ENCODE measurements at regions of chr16 and their contacts with region 1.

Region 1: GRCh38 chr16:11977376-11978041 is 975 bp downstream of the SNX29 start:
- DNase-seq: no peak
- ATAC-seq: no peak
- H3K4me3 ChIP-seq: peak overlapping the region; percentile 75 to 100 (median 84)
- H3K4me3 Mint-ChIP-seq: peak overlapping the region; percentile 96
- H3K27ac ChIP-seq: peak overlapping the region; percentile 82 to 92
- H3K27ac Mint-ChIP-seq: peak overlapping the region; percentile 94
- H3K4me1 ChIP-seq: peaks cover 55 to 60% of the 10 kb centered on the region in 2 donors
- H3K4me1 Mint-ChIP-seq: peaks cover 60% of the 10 kb centered on the region
- H3K27me3 ChIP-seq: no peaks in the 10 kb centered on the region
- H3K27me3 Mint-ChIP-seq: no peaks in the 10 kb centered on the region
- CTCF ChIP-seq: no peak

Region 2: DNA sequence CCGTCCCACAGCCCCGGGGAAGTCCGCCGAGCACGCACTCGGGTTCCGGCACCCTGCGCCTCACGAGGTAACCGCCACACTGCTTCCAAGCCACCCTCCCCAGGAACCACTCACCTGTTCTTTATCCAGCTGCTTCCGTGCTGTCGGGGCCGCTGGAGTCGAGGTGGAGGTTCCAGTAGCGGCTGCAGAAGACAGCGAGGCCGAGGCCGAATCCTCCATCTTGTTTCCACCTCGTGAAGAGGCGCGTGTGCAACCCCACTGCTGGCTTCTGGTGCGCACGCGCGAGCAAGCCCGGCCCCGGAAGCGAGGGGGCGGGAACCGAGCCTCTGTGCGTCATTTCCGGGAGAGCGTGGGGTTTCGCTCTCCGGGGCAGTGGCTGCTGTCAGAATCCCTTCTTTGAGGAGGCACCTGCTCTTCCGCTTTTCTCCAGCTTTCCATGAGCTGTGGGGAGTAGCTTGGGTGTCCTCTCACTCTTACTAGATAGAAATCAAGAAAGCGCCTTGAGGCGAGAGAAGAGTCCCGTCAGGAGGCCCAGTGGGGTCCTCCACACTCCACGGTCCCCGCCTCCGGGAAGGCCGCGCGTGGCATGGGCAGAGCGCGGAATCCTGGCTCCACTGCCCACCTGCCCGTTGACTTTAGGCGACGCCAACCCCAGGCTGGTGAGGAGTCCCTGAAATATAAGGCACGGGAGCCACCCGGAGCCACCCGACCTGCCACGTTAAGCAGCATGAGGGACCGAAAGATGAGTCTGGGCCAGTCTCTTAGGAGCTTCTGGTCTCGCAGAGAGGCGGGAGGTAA is 126.0 kb before region 1 on chr16 and contains the start of gene RSL1D1:
- CTCF ChIA-PET with region 1: no interaction called
- POLR2A ChIA-PET with region 1: no interaction called
- intact Hi-C with region 1: loop called (anchors 1 kb)
- DNase-seq: peak; percentile 98
- ATAC-seq: peak; percentile 88
- H3K4me3 ChIP-seq: peak within 1 kb of the TSS; percentile 73 to 97 (median 91)
- H3K4me3 Mint-ChIP-seq: peak within 1 kb of the TSS; percentile 97
- H3K27ac ChIP-seq: peak within 1 kb of the TSS; percentile 81 to 94
- H3K27ac Mint-ChIP-seq: peak within 1 kb of the TSS; percentile 97
- H3K4me1 ChIP-seq: peaks cover 18 to 27% of the 10 kb centered on the region in 2 donors
- H3K4me1 Mint-ChIP-seq: peaks cover 40% of the 10 kb centered on the region
- H3K27me3 ChIP-seq: no peaks in the 10 kb centered on the region
- H3K27me3 Mint-ChIP-seq: no peaks in the 10 kb centered on the region
- CTCF ChIP-seq: no peak
- total RNA-seq, gene RSL1D1: 146 and 167 TPM in 2 replicates

Region 3: DNA sequence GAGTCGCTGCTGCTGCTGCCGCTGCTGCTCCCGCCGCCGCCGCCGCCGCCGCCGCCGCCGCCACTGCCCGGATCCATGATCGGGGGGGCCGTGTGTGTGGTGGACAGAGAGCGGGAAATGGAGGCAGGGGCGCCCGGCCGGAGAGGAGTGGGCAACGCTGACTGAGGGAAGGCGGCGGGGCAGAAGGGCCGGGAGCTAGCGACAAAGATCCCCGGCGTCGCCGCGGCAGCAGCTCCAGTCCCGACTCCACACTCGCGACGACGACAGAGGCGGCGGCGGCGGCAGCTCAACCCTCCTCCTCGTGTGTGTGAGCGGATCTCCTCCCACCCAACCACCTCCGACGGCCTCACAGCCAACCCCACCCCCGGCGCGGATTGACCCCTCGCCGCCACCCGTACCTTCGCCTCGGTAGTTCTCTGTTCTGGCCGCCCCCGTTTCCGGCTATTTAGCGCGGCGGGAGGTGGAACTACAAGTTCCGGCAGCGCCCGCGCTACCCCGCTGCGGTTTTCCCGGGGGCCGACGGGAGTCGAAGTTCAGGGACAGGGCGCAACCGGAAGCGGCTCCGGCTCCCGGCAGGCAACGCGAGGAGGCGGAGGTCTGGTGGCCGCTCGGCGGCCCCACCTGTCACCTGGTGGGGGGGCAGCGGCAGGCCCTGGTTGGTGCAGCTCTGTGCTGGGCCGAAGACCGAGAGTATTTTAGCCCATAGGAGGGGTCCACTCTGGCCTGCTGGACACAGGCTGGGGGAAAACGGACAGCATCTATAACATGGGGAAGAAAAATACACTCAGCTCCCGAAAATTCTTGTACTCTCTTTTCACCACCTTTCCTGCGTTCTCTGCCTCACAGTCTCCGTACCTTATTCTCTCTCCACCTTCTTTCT is 61.6 kb before region 1 on chr16 and contains the start of gene GSPT1:
- CTCF ChIA-PET with region 1: no interaction called
- POLR2A ChIA-PET with region 1: no interaction called
- intact Hi-C with region 1: loop called (anchors 2 kb)
- DNase-seq: peak; percentile 99
- ATAC-seq: peak; percentile 93
- H3K4me3 ChIP-seq: peak within 1 kb of the TSS; percentile 65 to 78 (median 76)
- H3K4me3 Mint-ChIP-seq: peak within 1 kb of the TSS; percentile 91
- H3K27ac ChIP-seq: peak within 1 kb of the TSS; percentile 72 to 82
- H3K27ac Mint-ChIP-seq: peak within 1 kb of the TSS; percentile 95
- H3K4me1 ChIP-seq: peaks cover 29 to 31% of the 10 kb centered on the region in 2 donors
- H3K4me1 Mint-ChIP-seq: peaks cover 32% of the 10 kb centered on the region
- H3K27me3 ChIP-seq: peaks cover 0 to 4% (median 0%) of the 10 kb centered on the region in 4 experiments
- H3K27me3 Mint-ChIP-seq: peaks cover 11% of the 10 kb centered on the region
- CTCF ChIP-seq: no peak
- total RNA-seq, gene GSPT1: 72.6 and 77.0 TPM in 2 replicates

Region 4: DNA sequence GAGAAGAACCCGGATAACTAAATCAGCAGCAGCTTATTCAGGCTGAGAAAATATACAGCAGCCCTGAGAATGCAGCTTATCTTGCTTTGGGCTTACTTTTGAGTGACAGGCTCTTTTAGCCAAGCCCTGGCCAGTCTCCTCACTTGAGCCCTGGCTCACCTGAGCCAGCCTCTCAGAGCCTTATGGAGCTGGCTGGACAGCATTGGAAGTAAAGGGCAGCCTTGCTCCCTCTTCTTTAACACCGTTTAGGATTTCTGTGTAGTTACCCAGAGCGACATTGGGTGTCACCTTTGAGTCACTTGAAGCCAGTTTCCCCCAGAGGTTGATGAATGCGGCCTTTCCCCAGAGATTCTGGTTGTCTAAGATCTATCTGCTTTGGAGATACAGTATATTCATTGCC is 28.0 kb before region 1 on chr16:
- CTCF ChIA-PET with region 1: interaction called, 23 read pairs
- POLR2A ChIA-PET with region 1: interaction called, 3 read pairs
- intact Hi-C with region 1: loop called (anchors 5 kb)
- DNase-seq: peak; percentile 78
- ATAC-seq: peak; percentile 91
- H3K4me3 ChIP-seq: no peak overlapping the region
- H3K4me3 Mint-ChIP-seq: no peak overlapping the region
- H3K27ac ChIP-seq: no peak overlapping the region
- H3K27ac Mint-ChIP-seq: peak overlapping the region; percentile 64
- H3K4me1 ChIP-seq: peaks cover 13 to 14% of the 10 kb centered on the region in 2 donors
- H3K4me1 Mint-ChIP-seq: peaks cover 9% of the 10 kb centered on the region
- H3K27me3 ChIP-seq: no peaks in the 10 kb centered on the region
- H3K27me3 Mint-ChIP-seq: no peaks in the 10 kb centered on the region
- CTCF ChIP-seq: peak; percentile 87

Region 5: GRCh38 chr16:11964761-11965551 is 12.6 kb before region 1 on chr16 and contains the start of gene TNFRSF17:
- CTCF ChIA-PET with region 1: interaction called, 5 read pairs
- POLR2A ChIA-PET with region 1: interaction called, 39 read pairs
- intact Hi-C with region 1: loop called (anchors 1 kb)
- DNase-seq: peak; percentile 58
- ATAC-seq: peak; percentile 69
- H3K4me3 ChIP-seq: peak within 1 kb of the TSS in 4 of 5 experiments; percentile 25 to 65 (median 51)
- H3K4me3 Mint-ChIP-seq: peak within 1 kb of the TSS; percentile 87
- H3K27ac ChIP-seq: peak within 1 kb of the TSS; percentile 85 to 86
- H3K27ac Mint-ChIP-seq: peak within 1 kb of the TSS; percentile 97
- H3K4me1 ChIP-seq: peaks cover 51 to 83% of the 10 kb centered on the region in 2 donors
- H3K4me1 Mint-ChIP-seq: peaks cover 60% of the 10 kb centered on the region
- H3K27me3 ChIP-seq: no peaks in the 10 kb centered on the region
- H3K27me3 Mint-ChIP-seq: no peaks in the 10 kb centered on the region
- CTCF ChIP-seq: no peak
- total RNA-seq, gene TNFRSF17: 4.6 and 6.3 TPM in 2 replicates

Region 6: DNA sequence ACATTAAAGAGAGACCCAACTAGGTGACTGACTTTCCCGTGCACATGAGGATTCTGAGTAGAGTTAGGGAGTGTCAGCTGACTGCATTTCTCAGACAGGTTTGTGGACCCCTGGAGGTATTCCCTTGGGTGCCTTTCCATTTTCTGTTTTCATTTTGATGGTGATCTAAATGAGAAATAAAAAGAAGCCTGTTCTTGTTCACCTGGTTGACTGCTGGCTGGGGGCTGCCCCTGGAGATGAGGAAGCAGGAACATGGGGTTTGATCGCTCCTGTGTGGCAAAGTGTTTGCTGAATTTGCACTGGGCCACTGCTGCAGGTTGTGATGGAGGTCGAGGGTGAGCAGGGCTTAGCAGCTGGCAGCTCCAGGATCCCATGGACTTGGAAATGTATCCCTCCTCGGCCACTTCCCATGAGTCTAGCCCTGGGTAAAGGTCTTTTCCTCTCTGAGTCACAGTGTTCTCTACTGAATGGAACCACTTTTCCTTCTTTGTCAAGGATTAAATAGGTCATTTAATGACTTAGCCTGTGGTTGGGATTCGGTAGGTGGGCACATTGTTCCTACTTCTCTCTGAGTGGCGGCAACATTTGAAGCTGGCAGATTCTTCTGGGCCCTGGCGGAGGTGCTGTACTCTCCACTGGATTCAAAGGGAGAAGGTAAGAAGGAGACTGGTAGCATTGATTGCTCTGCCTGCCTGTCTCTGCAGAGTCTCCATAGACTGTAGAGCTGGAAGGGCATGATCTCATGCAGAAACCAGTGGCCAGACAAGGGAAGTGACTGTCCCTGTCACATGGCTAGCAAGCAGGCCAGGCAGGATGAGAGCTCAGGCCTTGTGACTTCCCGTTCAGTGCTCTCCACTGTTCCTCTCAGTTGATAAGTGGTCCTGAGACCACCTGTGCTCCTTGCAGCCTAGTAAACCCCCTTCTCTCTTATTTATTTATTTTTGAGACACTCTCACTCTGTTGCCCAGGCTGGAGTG is 16.9 kb after region 1 on chr16:
- CTCF ChIA-PET with region 1: no interaction called
- POLR2A ChIA-PET with region 1: interaction called, 3 read pairs
- intact Hi-C with region 1: loop called (anchors 2 kb)
- DNase-seq: peak; percentile 52
- ATAC-seq: peak; percentile 57
- H3K4me3 ChIP-seq: no peak overlapping the region
- H3K4me3 Mint-ChIP-seq: peak overlapping the region; percentile 8
- H3K27ac ChIP-seq: peak overlapping the region; percentile 27 to 56
- H3K27ac Mint-ChIP-seq: peak overlapping the region; percentile 82
- H3K4me1 ChIP-seq: peaks cover 53 to 66% of the 10 kb centered on the region in 2 donors
- H3K4me1 Mint-ChIP-seq: peaks cover 78% of the 10 kb centered on the region
- H3K27me3 ChIP-seq: no peaks in the 10 kb centered on the region
- H3K27me3 Mint-ChIP-seq: no peaks in the 10 kb centered on the region
- CTCF ChIP-seq: no peak

Region 7: DNA sequence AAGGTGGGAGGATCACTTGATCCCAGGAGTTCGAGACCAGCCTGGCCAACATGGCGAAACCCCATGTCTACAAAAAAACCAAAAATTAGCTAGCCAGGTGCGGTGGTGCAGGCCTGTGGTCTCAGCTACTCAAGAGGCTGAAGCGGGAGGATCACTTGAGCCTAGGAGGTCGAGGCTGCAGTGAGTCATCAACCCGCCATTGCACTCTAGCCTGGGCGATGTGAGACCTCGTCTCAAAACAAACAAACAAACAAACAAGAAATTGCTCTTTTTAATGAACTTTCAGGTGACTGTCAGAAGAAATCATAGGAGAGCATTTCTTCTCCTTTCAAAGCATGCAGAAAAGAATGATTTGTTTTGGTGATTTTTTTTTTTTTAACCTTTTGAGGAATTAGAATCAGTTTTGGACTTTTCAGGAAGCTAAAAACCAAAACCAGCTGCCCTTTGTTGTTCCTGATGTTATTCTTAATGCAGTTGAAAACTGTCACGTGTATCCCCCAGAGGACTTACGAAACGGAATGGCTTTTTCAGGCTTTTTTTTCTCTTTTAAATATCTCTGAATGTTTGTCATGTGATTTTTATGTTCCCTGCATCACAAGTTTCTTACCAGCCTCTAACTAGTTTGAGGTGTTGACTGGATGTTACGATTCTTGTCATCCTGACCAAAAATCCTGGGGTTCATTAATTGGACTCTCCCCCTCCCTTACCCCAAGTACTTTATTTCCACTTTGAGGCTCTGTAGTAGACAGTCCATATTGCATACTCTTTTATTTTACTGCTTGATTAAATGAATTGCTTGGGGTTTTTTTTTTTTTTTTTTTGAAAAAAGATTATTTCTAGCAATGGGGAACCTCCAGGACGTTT is 33.1 kb after region 1 on chr16:
- CTCF ChIA-PET with region 1: interaction called, 4 read pairs
- POLR2A ChIA-PET with region 1: interaction called, 4 read pairs
- intact Hi-C with region 1: loop called (anchors 2 kb)
- DNase-seq: peak; percentile 75
- ATAC-seq: peak; percentile 60
- H3K4me3 ChIP-seq: peak overlapping the region in 1 of 5 experiments; percentile 44
- H3K4me3 Mint-ChIP-seq: peak overlapping the region; percentile 77
- H3K27ac ChIP-seq: peak overlapping the region; percentile 78 to 81
- H3K27ac Mint-ChIP-seq: peak overlapping the region; percentile 96
- H3K4me1 ChIP-seq: peaks cover 38 to 43% of the 10 kb centered on the region in 2 donors
- H3K4me1 Mint-ChIP-seq: peaks cover 50% of the 10 kb centered on the region
- H3K27me3 ChIP-seq: no peaks in the 10 kb centered on the region
- H3K27me3 Mint-ChIP-seq: no peaks in the 10 kb centered on the region
- CTCF ChIP-seq: no peak

Measured in B cell (primary cell).